ENCODE measurements at regions of chr1 and their contacts with region 1.

Region 1: DNA sequence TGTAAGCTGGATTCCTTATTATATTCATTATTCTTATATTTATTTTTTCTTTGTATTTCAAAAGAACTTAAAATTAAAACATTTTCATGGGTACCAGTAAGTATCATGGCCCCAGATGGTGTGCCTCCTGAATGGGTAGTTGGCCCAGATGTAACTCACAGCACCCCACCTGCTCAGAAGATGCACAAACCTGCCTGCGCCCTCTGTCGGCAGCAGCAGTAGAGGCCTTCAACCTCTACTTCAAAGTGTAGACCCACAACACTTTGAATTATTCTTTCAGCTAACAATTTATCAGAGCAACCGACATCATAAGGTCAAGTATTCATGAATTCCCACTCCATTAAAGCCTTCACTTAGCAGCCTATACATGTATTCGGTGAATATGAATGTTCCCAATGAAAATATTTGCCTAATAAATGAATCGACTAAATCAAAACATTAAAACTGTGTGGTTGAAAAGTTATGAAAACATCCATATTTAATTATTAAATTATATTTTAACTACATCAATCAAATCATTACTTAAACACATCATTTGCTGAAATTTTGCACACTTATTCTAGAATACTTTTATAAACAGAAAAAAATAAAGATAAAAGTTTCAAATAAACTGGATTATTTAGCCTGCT is 25.4 kb downstream of the PIGM start:
- DNase-seq: peak; percentile 59
- H3K4me3 ChIP-seq: no peak overlapping the region
- H3K27ac ChIP-seq: no peak overlapping the region
- H3K4me1 ChIP-seq: peaks cover 14% of the 10 kb centered on the region
- H3K27me3 ChIP-seq: no peaks in the 10 kb centered on the region
- CTCF ChIP-seq: peak; percentile 96 to 97

Region 2: DNA sequence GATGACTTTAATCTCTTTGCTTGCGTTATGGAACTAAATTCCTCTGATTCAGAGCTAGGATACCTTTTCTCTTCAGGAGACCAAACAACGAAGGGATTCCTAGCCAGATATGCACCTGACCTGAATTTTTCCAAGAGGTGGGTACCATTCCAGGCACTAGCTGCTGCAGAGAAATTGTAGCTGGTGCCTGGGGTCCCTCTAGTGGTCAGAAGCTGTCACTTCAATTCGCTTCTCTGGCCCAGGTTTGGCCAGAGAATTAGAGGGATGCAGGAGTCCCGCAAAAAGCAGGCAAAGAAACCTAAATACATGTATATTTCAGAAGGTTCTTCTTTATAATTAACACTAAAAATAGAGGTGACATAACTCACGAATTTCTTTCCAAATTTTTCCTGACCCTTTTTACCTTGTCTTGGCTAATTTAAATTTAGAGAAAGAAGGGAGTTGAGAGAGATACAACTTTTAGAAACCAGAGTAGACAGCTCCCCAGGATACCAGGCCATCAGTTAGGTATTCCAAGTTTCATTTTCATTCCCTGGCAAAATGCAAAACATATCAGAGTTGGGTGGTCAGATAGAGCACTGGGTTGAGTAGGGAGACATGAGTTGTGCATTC is 792.2 kb before region 1 on chr1:
- CTCF ChIA-PET with region 1: no interaction called
- dilution Hi-C with region 1: no loop called
- in situ Hi-C with region 1: no loop called
- intact Hi-C with region 1: loop called (anchors 10 kb)
- DNase-seq: peak; percentile 26
- H3K4me3 ChIP-seq: no peak overlapping the region
- H3K27ac ChIP-seq: no peak overlapping the region
- H3K4me1 ChIP-seq: peaks cover 3% of the 10 kb centered on the region
- H3K27me3 ChIP-seq: no peaks in the 10 kb centered on the region
- CTCF ChIP-seq: peak; percentile 93

Region 3: DNA sequence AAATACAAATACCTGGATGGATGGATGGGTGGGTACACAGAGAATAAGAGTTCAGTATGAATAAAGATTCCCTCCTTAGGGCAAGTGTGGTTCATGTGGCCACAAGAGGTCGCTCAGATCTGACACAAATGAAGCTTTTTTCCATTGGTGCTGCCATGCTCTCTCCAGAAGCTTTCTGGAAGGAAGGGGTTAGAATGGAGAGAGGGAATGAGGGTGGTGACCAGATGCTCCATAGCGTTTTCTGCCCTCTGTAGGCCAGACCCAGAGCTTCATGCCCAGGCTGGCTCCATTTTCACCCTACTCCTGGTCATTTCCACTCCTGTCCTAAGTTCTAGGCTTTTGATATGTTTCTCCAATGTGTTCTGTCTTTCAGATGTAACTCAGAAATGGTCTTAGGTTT is 207.5 kb before region 1 on chr1:
- CTCF ChIA-PET with region 1: interaction called, 4 read pairs
- dilution Hi-C with region 1: no loop called
- in situ Hi-C with region 1: loop called (anchors 10 kb)
- intact Hi-C with region 1: loop called (anchors 1 kb)
- DNase-seq: peak; percentile 76
- H3K4me3 ChIP-seq: no peak overlapping the region
- H3K27ac ChIP-seq: no peak overlapping the region
- H3K4me1 ChIP-seq: no peaks in the 10 kb centered on the region
- H3K27me3 ChIP-seq: peaks cover 2% of the 10 kb centered on the region
- CTCF ChIP-seq: peak; percentile 80 to 82

Region 4: DNA sequence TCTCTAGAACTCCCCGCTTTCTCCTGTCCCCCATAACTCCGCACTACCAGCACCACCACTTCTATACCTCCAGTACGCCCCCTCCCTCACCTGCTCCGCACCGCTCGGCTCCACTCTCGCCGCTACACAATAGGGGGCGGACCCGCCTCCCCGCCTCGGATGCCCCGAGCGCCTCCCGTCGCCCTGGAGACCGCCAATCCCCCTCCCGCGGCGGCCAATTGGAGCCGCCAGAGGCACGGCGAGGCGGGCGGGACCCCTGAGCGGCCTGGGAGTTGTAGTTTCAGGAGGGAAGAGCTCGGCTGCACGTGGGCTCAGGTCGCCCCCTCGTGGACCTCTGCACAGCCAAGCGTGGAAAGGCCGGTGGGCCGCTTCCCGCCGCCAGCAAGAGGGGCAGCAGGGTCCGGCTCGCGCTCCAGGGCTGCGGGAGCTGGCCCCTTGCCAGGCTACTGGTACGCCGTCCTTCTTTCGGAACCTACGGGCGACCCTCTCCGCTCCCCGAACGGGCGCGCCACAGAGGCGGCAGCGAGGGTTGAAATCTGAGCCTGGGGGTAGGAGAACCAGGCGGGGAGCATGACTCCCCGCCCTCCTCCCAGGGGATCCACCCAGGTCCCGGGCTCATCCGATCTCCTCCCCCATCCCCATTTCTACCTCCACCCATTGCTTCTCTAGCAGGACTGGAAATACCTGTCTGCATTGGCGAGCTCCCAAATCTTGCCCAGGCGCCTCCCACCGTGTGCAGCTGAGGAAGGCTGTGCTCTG is 60.8 kb before region 1 on chr1 and contains the start of gene IGSF9:
- CTCF ChIA-PET with region 1: interaction called, 3 read pairs
- dilution Hi-C with region 1: no loop called
- in situ Hi-C with region 1: no loop called
- intact Hi-C with region 1: loop called (anchors 2 kb)
- DNase-seq: peak; percentile 93
- H3K4me3 ChIP-seq: peak within 1 kb of the TSS; percentile 47 to 72 (median 65)
- H3K27ac ChIP-seq: peak within 1 kb of the TSS; percentile 53
- H3K4me1 ChIP-seq: peaks cover 33% of the 10 kb centered on the region
- H3K27me3 ChIP-seq: no peaks in the 10 kb centered on the region
- CTCF ChIP-seq: peak; percentile 7 to 53
- total RNA-seq, gene IGSF9: 1.2 to 21.9 TPM

Region 5: DNA sequence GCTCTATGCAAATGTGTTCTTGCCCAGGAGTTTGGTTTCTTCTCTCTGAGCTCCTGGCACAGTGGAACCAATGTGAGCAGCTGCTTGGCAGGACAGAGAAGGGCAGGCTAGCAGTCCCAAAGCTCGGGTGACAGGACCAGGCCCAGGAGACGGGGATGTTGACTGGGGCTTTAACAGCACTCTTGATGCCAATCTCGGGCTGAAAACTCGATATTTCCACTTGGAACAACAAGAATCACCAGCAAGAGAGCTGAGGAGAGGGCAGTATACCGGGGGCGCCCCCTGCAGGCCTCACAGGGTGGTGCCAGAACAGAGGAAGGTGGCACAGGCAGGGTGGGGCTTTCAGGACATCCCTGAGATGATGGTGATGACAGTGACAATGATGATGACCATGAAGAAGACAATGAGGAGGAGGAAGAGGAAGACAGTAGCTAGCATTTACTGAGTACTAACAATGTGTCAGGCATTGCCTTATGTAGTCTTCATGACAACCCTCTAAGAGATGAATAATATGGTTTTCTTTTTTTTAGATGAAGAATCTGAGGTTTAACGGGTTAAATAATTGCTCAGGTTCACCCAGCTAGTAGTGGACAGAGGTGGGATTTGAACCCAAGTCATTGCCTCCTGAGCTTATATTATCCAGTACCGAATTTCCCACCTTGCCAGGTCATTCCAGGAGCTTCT is 72.2 kb after region 1 on chr1:
- CTCF ChIA-PET with region 1: interaction called, 18 read pairs
- dilution Hi-C with region 1: no loop called
- in situ Hi-C with region 1: no loop called
- intact Hi-C with region 1: no loop called
- DNase-seq: peak; percentile 35
- H3K4me3 ChIP-seq: no peak overlapping the region
- H3K27ac ChIP-seq: no peak overlapping the region
- H3K4me1 ChIP-seq: no peaks in the 10 kb centered on the region
- H3K27me3 ChIP-seq: no peaks in the 10 kb centered on the region
- CTCF ChIP-seq: peak; percentile 90 to 95

Measured in mammary epithelial cell (primary cell).